Lower leg skin (tissue), 4 donors: ENCODE measurements at regions of chrX and their contacts with region 1.

Region 1: GRCh38 chrX:13638826-13639225 is 14.1 kb upstream of the TCEANC start:
- DNase-seq: no peak
- H3K4me3 ChIP-seq: no peak overlapping the region
- CTCF ChIP-seq: no peak
- POLR2A ChIP-seq: no peak

Region 2: DNA sequence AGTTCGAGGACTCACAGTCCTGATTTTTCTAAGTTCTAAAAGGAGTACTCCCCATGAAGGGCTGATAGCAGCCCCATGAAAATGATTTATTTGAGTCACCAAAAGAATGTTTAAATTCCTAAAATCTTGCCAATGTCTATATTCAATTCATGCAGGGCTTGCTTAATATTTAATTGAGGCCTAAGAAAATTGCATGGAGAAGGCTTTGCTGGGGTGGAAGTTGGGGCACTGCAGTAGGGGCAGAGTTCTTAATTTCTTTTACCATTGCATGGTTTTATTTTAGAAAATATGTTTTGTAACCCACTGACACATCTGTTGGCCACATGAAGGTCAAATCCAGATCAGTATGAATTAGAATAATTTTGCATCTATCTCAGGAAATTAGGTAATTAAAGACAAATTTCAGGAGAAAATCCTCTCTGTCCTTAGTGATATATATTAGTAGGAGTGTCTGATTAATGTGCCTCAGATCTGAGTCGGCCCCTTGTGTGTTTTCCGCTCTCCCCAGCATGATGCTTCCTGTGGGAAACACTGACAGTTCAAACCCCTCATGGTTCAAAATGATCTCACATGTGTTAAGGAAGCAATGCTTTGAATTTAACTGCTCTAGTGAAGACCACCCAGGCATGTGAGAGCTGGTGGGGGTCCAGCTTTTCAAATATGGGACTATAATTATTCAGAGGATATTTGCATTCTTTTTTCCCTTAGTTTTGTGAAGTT is 123.5 kb before region 1 on chrX:
- intact Hi-C with region 1: loop called (anchors 10 kb)
- DNase-seq: no peak
- H3K4me3 ChIP-seq: no peak overlapping the region
- CTCF ChIP-seq: no peak
- POLR2A ChIP-seq: no peak